CD8-positive, alpha-beta T cell (primary cell): ENCODE measurements at regions of chr19 and their contacts with region 1.

Region 1: GRCh38 chr19:13033819-13034611 is 38.7 kb downstream of the NFIX start:
- DNase-seq: peak in 8 of 9 experiments; percentile 13 to 65 (median 50)
- ATAC-seq: peak; percentile 84
- H3K4me3 ChIP-seq: no peak overlapping the region
- H3K4me3 Mint-ChIP-seq: no peak overlapping the region
- H3K27ac ChIP-seq: no peak overlapping the region
- H3K27ac Mint-ChIP-seq: no peak overlapping the region
- H3K4me1 ChIP-seq: no peaks in the 10 kb centered on the region
- H3K4me1 Mint-ChIP-seq: no peaks in the 10 kb centered on the region
- H3K27me3 ChIP-seq: no peaks in the 10 kb centered on the region
- H3K27me3 Mint-ChIP-seq: no peaks in the 10 kb centered on the region
- CTCF ChIP-seq: peak; percentile 50

Region 2: DNA sequence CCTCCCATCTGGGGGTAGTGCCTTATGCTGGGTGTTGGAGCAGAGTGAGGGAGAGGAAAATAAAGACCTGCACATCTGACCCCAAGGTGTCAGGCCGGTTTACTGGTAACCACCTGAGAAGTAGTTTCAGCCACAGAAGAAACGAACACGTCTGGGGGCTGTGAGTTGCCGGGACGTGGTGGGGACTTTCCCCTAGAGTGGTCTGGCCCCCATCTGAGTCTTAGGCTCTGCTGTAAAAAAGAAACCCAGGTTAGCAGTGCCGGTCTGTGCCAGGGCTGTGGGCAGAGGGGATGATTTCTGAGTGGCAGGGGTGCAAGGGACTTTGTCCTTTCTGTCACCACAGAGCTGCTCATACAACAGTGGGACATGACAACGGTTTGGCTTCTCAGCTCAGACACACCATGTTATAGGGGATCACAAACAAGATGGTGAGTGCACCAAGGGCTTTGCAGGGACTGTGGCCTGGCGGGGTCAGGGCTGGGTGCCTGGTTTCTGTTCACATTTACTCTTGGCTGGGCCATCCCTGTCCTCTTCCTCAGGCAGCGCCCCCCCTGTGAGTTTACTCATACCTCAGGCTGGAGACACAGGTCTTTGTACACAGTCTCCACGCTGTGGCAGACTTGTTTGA is 134.0 kb before region 1 on chr19:
- CTCF ChIA-PET with region 1: no interaction called
- POLR2A ChIA-PET with region 1: no interaction called
- intact Hi-C with region 1: no loop called
- DNase-seq: no peak
- ATAC-seq: no peak
- H3K4me3 ChIP-seq: no peak overlapping the region
- H3K4me3 Mint-ChIP-seq: no peak overlapping the region
- H3K27ac ChIP-seq: no peak overlapping the region
- H3K27ac Mint-ChIP-seq: no peak overlapping the region
- H3K4me1 ChIP-seq: no peaks in the 10 kb centered on the region
- H3K4me1 Mint-ChIP-seq: no peaks in the 10 kb centered on the region
- H3K27me3 ChIP-seq: no peaks in the 10 kb centered on the region
- H3K27me3 Mint-ChIP-seq: no peaks in the 10 kb centered on the region
- CTCF ChIP-seq: no peak

Region 3: GRCh38 chr19:13012690-13013608 is 21.1 kb before region 1 on chr19:
- CTCF ChIA-PET with region 1: interaction called, 11 read pairs
- POLR2A ChIA-PET with region 1: no interaction called
- intact Hi-C with region 1: no loop called
- DNase-seq: peak in 6 of 9 experiments; percentile 23 to 64 (median 46)
- ATAC-seq: peak; percentile 62
- H3K4me3 ChIP-seq: peak overlapping the region; percentile 43 to 44
- H3K4me3 Mint-ChIP-seq: peak overlapping the region; percentile 87
- H3K27ac ChIP-seq: no peak overlapping the region
- H3K27ac Mint-ChIP-seq: peak overlapping the region; percentile 10
- H3K4me1 ChIP-seq: peaks cover 31% of the 10 kb centered on the region
- H3K4me1 Mint-ChIP-seq: peaks cover 25% of the 10 kb centered on the region
- H3K27me3 ChIP-seq: peaks cover 34 to 53% of the 10 kb centered on the region in 2 experiments
- H3K27me3 Mint-ChIP-seq: peaks cover 73% of the 10 kb centered on the region
- CTCF ChIP-seq: no peak

Region 4: DNA sequence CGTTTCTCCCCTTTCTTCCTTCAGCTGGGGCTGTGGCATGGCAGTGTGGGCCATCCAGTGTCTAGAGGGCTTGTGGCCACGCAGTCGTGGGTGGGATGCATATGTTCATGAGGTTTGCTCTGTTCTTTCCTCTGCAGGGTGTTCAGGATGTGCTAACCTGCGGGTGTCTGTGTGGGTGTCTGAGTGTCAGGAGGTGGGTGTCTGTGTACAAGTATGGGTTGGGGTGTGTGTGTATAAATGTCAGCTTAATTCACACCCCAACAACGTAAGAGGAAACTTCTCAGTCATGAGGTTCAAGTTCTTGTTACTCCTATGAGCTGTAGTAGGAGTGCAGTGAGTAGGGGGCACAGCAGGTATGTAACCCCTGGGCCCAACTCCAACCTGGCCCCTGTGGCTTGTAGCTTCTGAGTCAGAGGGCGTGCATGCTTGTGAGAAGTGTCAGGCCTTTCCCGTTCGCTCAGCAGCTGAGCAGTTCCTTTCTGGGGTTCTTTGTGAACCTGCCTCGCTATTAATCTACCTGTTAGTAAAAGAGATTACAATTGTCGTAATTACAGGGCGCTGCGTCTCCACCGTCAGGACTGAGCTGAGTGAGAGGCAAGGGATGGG is 10.3 kb after region 1 on chr19:
- CTCF ChIA-PET with region 1: interaction called, 10 read pairs
- POLR2A ChIA-PET with region 1: interaction called, 7 read pairs
- intact Hi-C with region 1: no loop called
- DNase-seq: peak; percentile 29 to 92 (median 58)
- ATAC-seq: peak; percentile 82
- H3K4me3 ChIP-seq: no peak overlapping the region
- H3K4me3 Mint-ChIP-seq: peak overlapping the region; percentile 27
- H3K27ac ChIP-seq: peak overlapping the region; percentile 42 to 74
- H3K27ac Mint-ChIP-seq: peak overlapping the region; percentile 87
- H3K4me1 ChIP-seq: peaks cover 36% of the 10 kb centered on the region
- H3K4me1 Mint-ChIP-seq: peaks cover 29% of the 10 kb centered on the region
- H3K27me3 ChIP-seq: no peaks in the 10 kb centered on the region
- H3K27me3 Mint-ChIP-seq: no peaks in the 10 kb centered on the region
- CTCF ChIP-seq: no peak

Region 5: GRCh38 chr19:13093407-13094105 is 59.5 kb after region 1 on chr19:
- CTCF ChIA-PET with region 1: interaction called, 20 read pairs
- POLR2A ChIA-PET with region 1: no interaction called
- intact Hi-C with region 1: loop called in 1 of 2 experiments (anchors 5 kb)
- DNase-seq: peak; percentile 55 to 88 (median 80)
- ATAC-seq: peak; percentile 74
- H3K4me3 ChIP-seq: no peak overlapping the region
- H3K4me3 Mint-ChIP-seq: no peak overlapping the region
- H3K27ac ChIP-seq: no peak overlapping the region
- H3K27ac Mint-ChIP-seq: no peak overlapping the region
- H3K4me1 ChIP-seq: peaks cover 29% of the 10 kb centered on the region
- H3K4me1 Mint-ChIP-seq: peaks cover 18% of the 10 kb centered on the region
- H3K27me3 ChIP-seq: peaks cover 16 to 28% of the 10 kb centered on the region in 2 experiments
- H3K27me3 Mint-ChIP-seq: peaks cover 21% of the 10 kb centered on the region
- CTCF ChIP-seq: peak; percentile 92

Region 6: GRCh38 chr19:14655726-14656125 is 1621.7 kb after region 1 on chr19:
- CTCF ChIA-PET with region 1: no interaction called
- POLR2A ChIA-PET with region 1: no interaction called
- intact Hi-C with region 1: no loop called
- DNase-seq: no peak
- ATAC-seq: no peak
- H3K4me3 ChIP-seq: no peak overlapping the region
- H3K4me3 Mint-ChIP-seq: no peak overlapping the region
- H3K27ac ChIP-seq: no peak overlapping the region
- H3K27ac Mint-ChIP-seq: no peak overlapping the region
- H3K4me1 ChIP-seq: no peaks in the 10 kb centered on the region
- H3K4me1 Mint-ChIP-seq: no peaks in the 10 kb centered on the region
- H3K27me3 ChIP-seq: no peaks in the 10 kb centered on the region
- H3K27me3 Mint-ChIP-seq: peaks cover 24% of the 10 kb centered on the region
- CTCF ChIP-seq: no peak